ENCODE measurements at regions of chr12 and their contacts with region 1.

Region 1: GRCh38 chr12:108691175-108691997 is 39.9 kb downstream of the CORO1C start:
- DNase-seq: peak; percentile 92
- ATAC-seq: peak; percentile 63
- H3K4me3 Mint-ChIP-seq: peak overlapping the region; percentile 67
- H3K27ac Mint-ChIP-seq: peak overlapping the region; percentile 96
- H3K4me1 Mint-ChIP-seq: peaks cover 80% of the 10 kb centered on the region
- H3K27me3 Mint-ChIP-seq: no peaks in the 10 kb centered on the region

Region 2: DNA sequence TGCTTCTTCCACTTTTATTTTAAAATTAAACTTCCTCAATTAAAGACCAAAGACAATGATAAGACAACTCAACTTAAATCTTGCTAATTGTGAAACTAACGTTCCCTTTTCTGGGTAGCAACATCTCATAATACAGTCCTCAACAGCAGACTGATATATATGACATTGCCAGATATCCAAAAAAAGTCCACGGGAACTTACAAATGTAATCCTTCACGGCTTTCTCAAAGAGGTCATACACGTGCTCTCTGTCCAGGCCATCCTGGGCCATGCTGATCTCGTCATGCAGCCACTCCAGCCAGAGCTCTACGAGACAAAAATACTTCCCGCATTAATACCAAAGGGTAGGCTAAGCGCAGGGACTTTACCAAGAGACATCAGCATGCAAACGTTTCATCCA is 143.7 kb before region 1 on chr12:
- CTCF ChIA-PET with region 1: no interaction called
- POLR2A ChIA-PET with region 1: no interaction called
- intact Hi-C with region 1: no loop called
- DNase-seq: no peak
- ATAC-seq: no peak
- H3K4me3 Mint-ChIP-seq: no peak overlapping the region
- H3K27ac Mint-ChIP-seq: no peak overlapping the region
- H3K4me1 Mint-ChIP-seq: peaks cover 26% of the 10 kb centered on the region
- H3K27me3 Mint-ChIP-seq: no peaks in the 10 kb centered on the region

Region 3: DNA sequence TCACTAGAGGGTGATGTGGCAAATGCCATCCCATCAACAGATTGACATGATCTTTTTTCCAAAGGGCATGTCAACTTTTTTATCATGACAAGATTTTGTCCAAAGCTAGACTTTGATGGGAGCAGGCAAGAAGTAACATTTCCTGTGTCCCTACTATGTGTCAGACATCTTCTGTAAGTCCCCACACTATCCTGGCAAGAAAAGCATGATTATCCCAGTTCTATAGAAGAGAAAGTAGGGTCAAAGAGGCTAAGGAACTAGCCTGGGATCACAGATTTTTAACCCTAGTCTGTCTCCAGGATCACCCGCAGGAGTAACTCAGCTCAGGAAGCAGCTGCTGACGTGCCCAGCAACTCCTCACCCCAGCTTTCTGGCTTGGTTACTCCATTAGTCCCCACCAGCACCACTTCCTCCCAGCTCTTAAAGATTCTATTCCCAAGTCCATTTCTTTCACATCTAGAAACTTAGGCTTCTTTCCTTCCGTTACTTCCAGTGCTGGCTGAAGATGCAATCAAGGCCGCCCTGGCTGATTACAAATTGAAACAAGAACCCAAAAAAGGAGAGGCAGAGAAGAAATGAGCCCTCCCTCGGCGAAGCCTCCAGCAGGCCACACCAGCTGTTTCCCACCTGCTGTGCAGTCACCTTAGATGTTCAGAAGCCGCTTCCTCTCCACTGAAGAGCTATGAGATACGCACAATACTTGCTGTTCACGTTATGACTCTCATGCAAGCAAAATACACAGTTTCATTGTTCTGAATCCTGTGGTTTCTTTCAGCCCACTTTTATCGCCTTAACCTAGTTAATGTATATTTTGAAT is 122.8 kb before region 1 on chr12:
- CTCF ChIA-PET with region 1: interaction called, 4 read pairs
- POLR2A ChIA-PET with region 1: interaction called, 3 read pairs
- intact Hi-C with region 1: loop called (anchors 1 to 2 kb)
- DNase-seq: peak; percentile 86
- ATAC-seq: peak; percentile 87
- H3K4me3 Mint-ChIP-seq: peak overlapping the region; percentile 29
- H3K27ac Mint-ChIP-seq: peak overlapping the region; percentile 89
- H3K4me1 Mint-ChIP-seq: peaks cover 84% of the 10 kb centered on the region
- H3K27me3 Mint-ChIP-seq: no peaks in the 10 kb centered on the region

Region 4: DNA sequence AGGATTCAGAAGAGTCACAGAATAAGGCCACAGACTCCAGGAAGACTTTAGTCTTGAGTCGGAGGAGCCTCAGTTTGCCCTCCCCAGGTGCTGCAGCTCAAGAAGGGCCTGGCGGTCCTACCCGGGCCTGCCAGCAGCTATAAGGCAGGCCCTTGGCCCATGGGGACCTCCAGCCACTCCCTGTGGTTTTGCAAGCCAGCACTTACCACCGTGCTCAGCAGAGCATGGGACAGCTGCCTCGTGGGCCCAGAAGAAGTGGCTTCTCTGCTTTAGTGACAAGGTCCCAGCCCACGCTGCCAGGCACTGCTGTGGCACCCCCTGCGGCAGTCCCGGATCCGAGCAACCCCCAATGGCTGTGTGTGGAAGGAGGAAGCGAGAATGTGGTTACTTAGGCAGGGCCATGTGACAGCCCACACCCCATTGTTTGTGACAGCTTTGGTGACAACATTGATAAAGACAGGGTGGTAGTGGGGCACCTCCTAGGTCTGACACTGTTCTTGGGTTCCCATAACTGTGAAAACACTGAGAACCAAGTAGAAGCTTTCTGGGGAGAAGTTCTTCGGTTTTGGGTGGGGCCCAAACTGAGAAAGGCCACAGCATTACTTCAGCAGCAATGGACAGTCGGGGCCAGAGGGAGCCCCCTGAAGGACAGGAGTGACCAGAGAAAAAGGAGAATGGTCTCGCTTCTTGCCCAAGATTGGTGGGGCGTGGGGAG is 57.7 kb before region 1 on chr12 and contains the start of gene SELPLG:
- CTCF ChIA-PET with region 1: interaction called, 7 read pairs
- POLR2A ChIA-PET with region 1: interaction called, 4 read pairs
- intact Hi-C with region 1: loop called (anchors 1 kb)
- DNase-seq: peak; percentile 92
- ATAC-seq: peak; percentile 53
- H3K4me3 Mint-ChIP-seq: peak within 1 kb of the TSS; percentile 81
- H3K27ac Mint-ChIP-seq: peak within 1 kb of the TSS; percentile 99
- H3K4me1 Mint-ChIP-seq: peaks cover 61% of the 10 kb centered on the region
- H3K27me3 Mint-ChIP-seq: no peaks in the 10 kb centered on the region
- total RNA-seq, gene SELPLG: 31.0 to 36.9 TPM

Region 5: GRCh38 chr12:108722992-108723766 is 31.8 kb after region 1 on chr12:
- CTCF ChIA-PET with region 1: interaction called, 6 read pairs
- POLR2A ChIA-PET with region 1: no interaction called
- intact Hi-C with region 1: loop called in 1 of 2 experiments (anchors 1 kb)
- DNase-seq: peak; percentile 7
- ATAC-seq: peak; percentile 54
- H3K4me3 Mint-ChIP-seq: no peak overlapping the region
- H3K27ac Mint-ChIP-seq: no peak overlapping the region
- H3K4me1 Mint-ChIP-seq: peaks cover 39% of the 10 kb centered on the region
- H3K27me3 Mint-ChIP-seq: no peaks in the 10 kb centered on the region

Region 6: GRCh38 chr12:108856428-108857157 is 165.2 kb after region 1 on chr12:
- CTCF ChIA-PET with region 1: no interaction called
- POLR2A ChIA-PET with region 1: interaction called, 5 read pairs
- intact Hi-C with region 1: loop called in 1 of 2 experiments (anchors 2 kb)
- DNase-seq: peak; percentile 81
- ATAC-seq: peak; percentile 64
- H3K4me3 Mint-ChIP-seq: peak overlapping the region; percentile 82
- H3K27ac Mint-ChIP-seq: peak overlapping the region; percentile 86
- H3K4me1 Mint-ChIP-seq: peaks cover 43% of the 10 kb centered on the region
- H3K27me3 Mint-ChIP-seq: peaks cover 2% of the 10 kb centered on the region

Region 7: DNA sequence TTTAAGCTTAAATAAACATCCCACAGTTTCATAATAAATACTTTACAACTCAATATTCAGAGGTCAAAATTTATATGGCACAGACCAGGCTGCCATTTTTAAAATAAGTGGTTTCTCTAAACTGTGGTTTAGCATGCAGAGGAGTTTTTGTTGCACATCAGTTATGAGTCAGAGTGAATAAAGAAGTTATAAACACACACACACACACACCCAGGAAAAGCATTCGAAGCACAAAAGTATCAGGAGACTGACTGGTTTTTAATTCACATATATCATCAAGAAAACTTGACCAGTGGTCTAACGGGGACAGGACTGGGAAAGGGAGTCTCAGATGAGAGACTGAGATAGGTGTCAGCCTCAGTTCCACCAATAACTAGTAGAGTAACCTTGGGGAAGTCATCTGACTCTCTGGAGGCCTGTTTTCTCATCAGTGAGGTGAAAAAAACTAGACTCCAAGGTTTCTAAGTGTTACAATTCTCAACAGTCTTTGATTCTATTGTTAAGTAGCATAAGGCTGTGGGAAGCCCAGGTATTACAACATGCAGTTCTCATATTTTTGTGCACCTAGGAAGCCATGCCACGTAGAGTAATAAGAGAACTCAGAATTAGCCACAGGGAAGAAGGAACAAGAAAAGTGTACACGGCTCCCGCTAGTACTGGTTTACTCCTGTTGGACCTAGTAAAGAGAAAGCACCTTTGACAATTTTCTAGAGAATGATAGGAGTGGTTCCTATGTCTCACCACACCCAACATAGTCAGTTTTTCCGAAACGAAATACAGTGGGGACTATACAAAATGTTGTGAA is 1886.5 kb after region 1 on chr12:
- CTCF ChIA-PET with region 1: no interaction called
- POLR2A ChIA-PET with region 1: interaction called, 4 read pairs
- intact Hi-C with region 1: loop called in 1 of 2 experiments (anchors 5 kb)
- DNase-seq: peak; percentile 61
- ATAC-seq: peak; percentile 67
- H3K4me3 Mint-ChIP-seq: peak overlapping the region; percentile 91
- H3K27ac Mint-ChIP-seq: peak overlapping the region; percentile 100
- H3K4me1 Mint-ChIP-seq: peaks cover 80% of the 10 kb centered on the region
- H3K27me3 Mint-ChIP-seq: no peaks in the 10 kb centered on the region

Measured in activated CD4-positive, alpha-beta T cell treated with anti-CD3 and anti-CD28 coated beads for 36 hours (primary cell).